ENCODE measurements at regions of chr3 and their contacts with region 1.

Region 1: DNA sequence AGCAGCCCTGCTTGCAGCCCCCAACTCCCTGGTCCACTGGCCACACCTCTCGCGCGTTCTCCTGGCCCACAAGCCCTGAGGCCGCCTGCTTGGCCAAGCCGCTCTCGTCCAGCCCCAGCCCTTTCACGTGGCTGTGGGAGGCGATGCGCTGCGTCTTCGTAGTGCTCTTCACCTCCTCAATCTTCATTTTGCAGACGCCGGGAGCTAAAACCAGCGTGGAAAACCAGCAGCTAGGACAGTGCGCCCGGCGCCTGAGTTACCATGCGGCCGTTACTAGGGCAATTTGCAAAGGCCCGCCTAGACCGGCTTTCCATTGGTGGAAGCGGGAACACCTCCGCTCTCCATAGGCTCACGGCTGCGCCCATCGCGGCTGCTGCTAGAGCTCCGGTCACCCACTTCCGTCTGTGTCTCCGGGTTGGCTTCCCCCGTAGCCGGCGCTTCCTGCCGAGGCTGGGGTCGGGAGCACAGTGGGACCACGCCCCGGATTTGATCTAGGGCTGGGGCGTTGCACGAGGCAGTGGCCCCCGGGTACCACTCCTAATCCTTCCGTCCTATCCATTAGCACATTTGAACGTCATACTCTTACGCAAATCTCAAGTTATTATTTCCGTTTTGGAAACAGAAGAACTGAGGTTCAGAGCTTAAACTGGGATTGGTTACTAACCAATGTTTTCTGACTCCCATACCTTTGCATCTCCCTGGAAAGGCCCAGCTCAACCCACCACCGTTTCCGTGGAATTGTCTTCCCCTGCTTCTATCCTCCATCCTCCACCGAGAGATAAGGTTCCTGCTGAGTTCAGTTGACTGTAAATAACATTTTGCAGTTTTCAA is at the start of gene RUVBL1:
- DNase-seq: peak; percentile 97
- H3K4me3 ChIP-seq: peak within 1 kb of the TSS; percentile 97
- H3K4me3 Mint-ChIP-seq: peak within 1 kb of the TSS; percentile 94
- H3K27ac Mint-ChIP-seq: peak within 1 kb of the TSS; percentile 96
- H3K4me1 ChIP-seq: peaks cover 6% of the 10 kb centered on the region; the same call in 1 of the 2 replicates
- H3K4me1 Mint-ChIP-seq: peaks cover 18% of the 10 kb centered on the region
- H3K27me3 ChIP-seq: no peaks in the 10 kb centered on the region
- H3K27me3 Mint-ChIP-seq: no peaks in the 10 kb centered on the region
- CTCF ChIP-seq: no peak
- total RNA-seq, gene RUVBL1: 53.3 and 56.4 TPM in 2 replicates

Region 2: GRCh38 chr3:127984241-127984975 is 139.3 kb before region 1 on chr3:
- CTCF ChIA-PET with region 1: no interaction called
- POLR2A ChIA-PET with region 1: no interaction called
- intact Hi-C with region 1: no loop called
- DNase-seq: no peak
- H3K4me3 ChIP-seq: no peak overlapping the region
- H3K4me3 Mint-ChIP-seq: no peak overlapping the region
- H3K27ac Mint-ChIP-seq: no peak overlapping the region
- H3K4me1 ChIP-seq: no peaks in the 10 kb centered on the region
- H3K4me1 Mint-ChIP-seq: no peaks in the 10 kb centered on the region
- H3K27me3 ChIP-seq: no peaks in the 10 kb centered on the region
- H3K27me3 Mint-ChIP-seq: peaks cover 2% of the 10 kb centered on the region
- CTCF ChIP-seq: no peak

Region 3: DNA sequence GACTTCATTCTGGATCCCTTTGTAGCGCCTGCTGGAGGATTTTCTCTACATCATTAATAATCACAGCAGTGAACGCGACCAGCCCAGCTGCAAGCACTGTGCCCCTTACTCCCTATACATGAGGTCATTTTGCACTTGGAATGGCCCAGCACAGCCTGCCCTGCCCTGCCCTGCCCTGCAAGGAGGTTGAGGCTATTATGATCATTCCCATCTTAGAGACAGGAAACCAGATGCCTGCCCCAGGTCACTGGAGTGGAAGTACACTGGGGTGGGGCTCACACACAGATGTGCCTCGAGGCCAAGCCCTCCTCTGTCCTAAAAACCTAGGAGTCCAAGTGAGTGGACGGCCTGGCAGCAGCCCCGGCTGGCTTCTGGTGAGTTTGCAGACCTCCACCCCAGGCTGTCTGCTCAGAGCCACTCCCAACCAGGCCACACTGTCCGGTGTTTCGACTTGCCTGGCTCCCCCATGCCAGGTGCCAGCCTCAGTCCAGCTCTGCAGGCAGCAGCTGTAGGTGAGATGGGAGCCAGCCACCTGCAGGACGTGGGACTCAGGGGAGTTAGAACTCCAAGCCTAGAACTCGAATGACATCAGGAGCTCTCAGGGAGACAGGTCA is 101.9 kb before region 1 on chr3:
- CTCF ChIA-PET with region 1: no interaction called
- POLR2A ChIA-PET with region 1: no interaction called
- intact Hi-C with region 1: no loop called
- DNase-seq: no peak
- H3K4me3 ChIP-seq: no peak overlapping the region
- H3K4me3 Mint-ChIP-seq: no peak overlapping the region
- H3K27ac Mint-ChIP-seq: no peak overlapping the region
- H3K4me1 ChIP-seq: no peaks in the 10 kb centered on the region
- H3K4me1 Mint-ChIP-seq: no peaks in the 10 kb centered on the region
- H3K27me3 ChIP-seq: no peaks in the 10 kb centered on the region
- H3K27me3 Mint-ChIP-seq: peaks cover 19% of the 10 kb centered on the region
- CTCF ChIP-seq: no peak

Region 4: DNA sequence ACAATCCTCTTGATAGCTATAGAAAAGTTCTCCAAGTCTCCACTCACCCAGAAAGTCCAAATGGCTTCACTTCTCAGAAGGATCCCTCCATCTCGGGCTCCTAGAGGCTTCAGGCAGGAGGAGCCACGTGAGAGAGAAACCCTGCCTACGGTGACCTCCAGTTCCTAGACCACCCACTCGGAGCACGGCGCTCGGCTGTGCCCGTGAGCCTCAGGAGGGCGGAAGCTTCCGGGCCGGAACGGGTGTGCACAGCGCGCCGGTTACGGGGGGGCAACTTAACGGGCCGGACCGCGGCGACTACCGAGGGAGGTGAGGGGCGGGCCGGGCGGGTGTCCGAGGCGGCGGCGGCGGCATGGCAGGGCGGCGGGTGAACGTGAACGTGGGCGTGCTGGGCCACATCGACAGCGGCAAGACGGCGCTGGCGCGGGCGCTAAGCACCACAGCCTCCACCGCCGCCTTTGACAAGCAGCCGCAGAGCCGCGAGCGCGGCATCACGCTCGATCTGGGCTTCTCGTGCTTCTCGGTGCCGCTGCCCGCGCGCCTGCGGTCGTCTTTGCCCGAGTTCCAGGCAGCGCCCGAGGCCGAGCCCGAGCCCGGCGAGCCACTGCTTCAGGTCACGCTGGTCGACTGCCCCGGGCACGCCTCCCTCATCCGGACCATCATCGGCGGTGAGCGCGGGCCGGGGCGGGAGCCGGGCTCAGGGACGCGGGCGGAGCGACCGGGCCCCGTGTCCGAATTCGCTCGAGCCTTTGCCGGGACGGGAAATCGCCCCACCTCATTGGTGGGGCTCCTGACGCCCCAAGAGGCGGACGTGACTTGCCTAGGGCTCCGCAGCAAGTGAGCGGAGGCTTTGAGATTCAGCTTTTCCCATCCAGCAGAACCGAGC is 29.6 kb after region 1 on chr3 and contains the start of gene EEFSEC:
- CTCF ChIA-PET with region 1: interaction called, 3 read pairs
- POLR2A ChIA-PET with region 1: interaction called, 14 read pairs
- intact Hi-C with region 1: loop called (anchors 1 kb)
- DNase-seq: peak; percentile 84 to 89
- H3K4me3 ChIP-seq: peak within 1 kb of the TSS; percentile 62
- H3K4me3 Mint-ChIP-seq: peak within 1 kb of the TSS; percentile 78
- H3K27ac Mint-ChIP-seq: peak within 1 kb of the TSS; percentile 80
- H3K4me1 ChIP-seq: peaks cover 9% of the 10 kb centered on the region
- H3K4me1 Mint-ChIP-seq: peaks cover 12% of the 10 kb centered on the region
- H3K27me3 ChIP-seq: no peaks in the 10 kb centered on the region
- H3K27me3 Mint-ChIP-seq: no peaks in the 10 kb centered on the region
- CTCF ChIP-seq: no peak
- total RNA-seq, gene EEFSEC: 13.8 and 14.0 TPM in 2 replicates

Measured in Caco-2 (cell line).